ENCODE measurements at regions of chr20 and their contacts with region 1.

Region 1: GRCh38 chr20:7094438-7094997 is 327.0 kb downstream of the BMP2 start:
- DNase-seq: peak; percentile 43
- ATAC-seq: peak; percentile 76
- H3K4me3 ChIP-seq: no peak overlapping the region
- H3K27ac ChIP-seq: no peak overlapping the region
- H3K4me1 ChIP-seq: no peaks in the 10 kb centered on the region
- H3K27me3 ChIP-seq: no peaks in the 10 kb centered on the region
- CTCF ChIP-seq: peak; percentile 79
- EP300 ChIP-seq: no peak
- POLR2A ChIP-seq: no peak
- RAD21 ChIP-seq: peak; percentile 37; the same call in 1 of the 2 replicates

Region 2: GRCh38 chr20:6142348-6142993 is 952.0 kb before region 1 on chr20:
- CTCF ChIA-PET with region 1: no interaction called
- POLR2A ChIA-PET with region 1: no interaction called
- in situ Hi-C with region 1: no loop called
- intact Hi-C with region 1: loop called (anchors 10 kb)
- DNase-seq: peak; percentile 70
- ATAC-seq: peak; percentile 89
- H3K4me3 ChIP-seq: no peak overlapping the region
- H3K27ac ChIP-seq: no peak overlapping the region
- H3K4me1 ChIP-seq: no peaks in the 10 kb centered on the region
- H3K27me3 ChIP-seq: no peaks in the 10 kb centered on the region
- CTCF ChIP-seq: peak; percentile 87
- EP300 ChIP-seq: no peak
- POLR2A ChIP-seq: no peak
- RAD21 ChIP-seq: no peak; the same call in 1 of the 2 replicates

Region 3: DNA sequence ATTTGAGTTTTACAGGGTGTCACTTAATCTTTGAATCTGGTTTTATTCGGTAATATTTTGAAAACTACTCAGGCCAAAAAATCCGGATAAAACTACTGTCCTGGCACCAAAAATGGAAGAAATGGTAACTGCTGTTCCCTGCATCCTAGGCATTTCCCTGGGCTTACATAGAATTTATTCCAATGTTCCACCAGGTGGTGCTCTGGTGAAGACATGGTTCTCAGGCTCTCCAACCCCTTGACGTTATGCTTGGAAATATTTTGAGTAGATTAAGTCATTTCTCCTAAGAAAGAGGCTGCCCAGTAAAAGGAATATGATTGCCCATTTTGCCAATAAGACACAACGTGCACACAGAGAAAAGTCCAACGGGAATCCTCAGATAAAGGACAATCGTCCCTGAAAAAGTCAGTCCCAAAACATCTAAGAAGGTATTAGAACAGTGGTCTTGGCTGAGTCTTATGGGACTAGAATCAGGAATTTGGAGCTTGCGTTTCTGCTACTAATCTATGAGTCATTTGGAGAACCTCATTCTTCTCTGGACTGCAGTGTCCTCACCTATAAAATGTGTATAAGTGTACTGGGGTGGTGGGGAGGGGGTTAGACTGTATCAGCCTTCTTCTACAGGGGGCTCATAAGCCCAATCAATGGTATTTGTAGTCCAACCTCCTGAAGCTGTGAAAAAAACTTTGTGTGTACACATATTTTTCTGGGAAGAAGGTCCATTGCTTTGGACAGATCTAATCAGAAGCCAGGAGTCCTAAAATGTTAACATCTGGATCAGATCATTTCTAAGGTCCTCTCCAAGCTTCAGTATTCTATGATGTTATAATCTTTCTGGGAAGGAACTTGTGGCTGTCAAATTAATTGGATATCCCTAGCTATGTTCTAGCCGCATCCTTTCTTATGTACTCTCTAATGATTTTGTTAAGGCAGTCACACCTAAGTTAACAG is 458.0 kb before region 1 on chr20:
- CTCF ChIA-PET with region 1: no interaction called
- POLR2A ChIA-PET with region 1: no interaction called
- in situ Hi-C with region 1: no loop called
- intact Hi-C with region 1: loop called (anchors 1 kb)
- DNase-seq: peak; percentile 63
- ATAC-seq: peak; percentile 96
- H3K4me3 ChIP-seq: no peak overlapping the region
- H3K27ac ChIP-seq: no peak overlapping the region
- H3K4me1 ChIP-seq: no peaks in the 10 kb centered on the region
- H3K27me3 ChIP-seq: no peaks in the 10 kb centered on the region
- CTCF ChIP-seq: peak; percentile 80
- EP300 ChIP-seq: no peak
- POLR2A ChIP-seq: no peak
- RAD21 ChIP-seq: peak; percentile 57; the same call in 1 of the 2 replicates

Region 4: DNA sequence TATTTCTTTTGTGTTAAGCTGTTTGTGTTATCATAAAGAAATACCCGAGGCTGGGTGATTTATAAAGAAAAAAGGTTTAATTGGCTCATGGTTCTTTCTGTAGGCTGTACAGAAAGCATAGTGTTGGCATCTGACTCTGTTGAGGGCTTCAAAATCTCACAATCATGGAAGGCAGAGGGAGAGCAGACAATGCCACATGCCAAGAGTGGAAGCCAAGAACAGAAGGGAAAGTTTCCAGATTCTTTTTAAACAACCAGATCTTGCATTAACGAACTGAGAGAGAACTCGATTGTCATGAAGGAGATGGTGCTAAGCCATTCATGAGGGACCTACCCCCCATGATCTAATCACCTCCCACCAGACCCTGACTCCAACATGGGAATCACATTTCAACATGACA is 36.9 kb before region 1 on chr20:
- CTCF ChIA-PET with region 1: no interaction called
- POLR2A ChIA-PET with region 1: no interaction called
- in situ Hi-C with region 1: no loop called
- intact Hi-C with region 1: loop called (anchors 1 kb)
- DNase-seq: no peak
- ATAC-seq: no peak
- H3K4me3 ChIP-seq: no peak overlapping the region
- H3K27ac ChIP-seq: no peak overlapping the region
- H3K4me1 ChIP-seq: no peaks in the 10 kb centered on the region
- H3K27me3 ChIP-seq: no peaks in the 10 kb centered on the region
- CTCF ChIP-seq: no peak
- EP300 ChIP-seq: no peak
- POLR2A ChIP-seq: no peak
- RAD21 ChIP-seq: no peak

Region 5: DNA sequence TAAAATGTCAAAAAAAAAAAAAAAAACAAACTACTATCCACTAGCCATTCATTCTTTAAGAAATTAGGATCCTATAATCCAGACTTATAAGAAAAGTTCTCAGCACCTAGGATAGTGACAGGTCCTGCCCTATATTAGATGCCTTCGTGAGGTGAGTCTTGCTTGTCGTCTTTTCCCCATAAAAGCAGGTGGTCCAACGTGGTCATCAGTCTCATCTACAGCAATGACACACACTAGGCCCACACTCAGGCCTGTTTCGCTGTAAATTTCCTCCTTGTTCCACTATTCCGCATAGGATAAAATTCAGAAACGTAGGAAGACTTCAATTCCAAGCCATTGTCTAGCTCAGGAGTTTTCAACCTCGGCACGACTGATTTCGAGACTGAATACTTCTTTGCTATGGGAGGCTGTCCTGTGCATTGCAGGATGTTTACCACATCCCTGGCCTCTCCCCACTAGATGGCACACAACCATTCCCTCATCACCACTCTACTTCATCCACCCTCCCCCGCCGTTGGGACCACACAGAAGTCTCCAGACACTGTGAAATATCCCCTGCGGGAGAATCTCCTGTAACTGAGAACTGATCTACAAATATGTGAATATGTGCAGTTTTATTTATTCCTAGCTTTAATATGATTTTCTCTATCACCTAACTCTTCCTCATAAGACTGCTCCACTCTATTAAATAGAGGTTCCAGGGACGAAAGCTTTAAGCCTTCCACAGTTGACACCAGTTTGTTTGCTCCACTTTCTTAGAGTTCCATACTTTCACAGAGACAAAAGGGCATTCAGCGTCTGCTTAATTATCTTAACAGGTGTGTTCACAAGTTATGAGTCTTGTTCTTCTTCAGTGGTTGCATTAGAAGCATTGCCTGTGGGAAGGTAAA is 19.3 kb after region 1 on chr20:
- CTCF ChIA-PET with region 1: no interaction called
- POLR2A ChIA-PET with region 1: no interaction called
- in situ Hi-C with region 1: no loop called
- intact Hi-C with region 1: no loop called
- DNase-seq: peak; percentile 49
- ATAC-seq: peak; percentile 100
- H3K4me3 ChIP-seq: no peak overlapping the region
- H3K27ac ChIP-seq: no peak overlapping the region
- H3K4me1 ChIP-seq: no peaks in the 10 kb centered on the region
- H3K27me3 ChIP-seq: no peaks in the 10 kb centered on the region; a peak in 1 of 5 replicates
- CTCF ChIP-seq: peak; percentile 84
- EP300 ChIP-seq: no peak
- POLR2A ChIP-seq: no peak
- RAD21 ChIP-seq: peak; percentile 78